ENCODE measurements at regions of chr11 and their contacts with region 1.

Region 1: GRCh38 chr11:34357701-34358257 is at the start of gene ABTB2:
- DNase-seq: peak; percentile 100
- H3K4me3 ChIP-seq: peak within 1 kb of the TSS; percentile 71
- H3K27ac ChIP-seq: peak within 1 kb of the TSS; percentile 54
- H3K4me1 ChIP-seq: peaks cover 43% of the 10 kb centered on the region
- H3K27me3 ChIP-seq: no peaks in the 10 kb centered on the region
- CTCF ChIP-seq: no peak
- total RNA-seq, gene ABTB2: 40.7 and 46.3 TPM in 2 replicates

Region 2: GRCh38 chr11:33808228-33808828 is 549.5 kb before region 1 on chr11:
- CTCF ChIA-PET with region 1: interaction called, 6 read pairs
- POLR2A ChIA-PET with region 1: no interaction called
- intact Hi-C with region 1: loop called (anchors 1 kb)
- DNase-seq: peak; percentile 98
- H3K4me3 ChIP-seq: no peak overlapping the region
- H3K27ac ChIP-seq: no peak overlapping the region
- H3K4me1 ChIP-seq: peaks cover 4% of the 10 kb centered on the region
- H3K27me3 ChIP-seq: no peaks in the 10 kb centered on the region
- CTCF ChIP-seq: peak; percentile 100

Region 3: GRCh38 chr11:33857933-33858371 is 499.8 kb before region 1 on chr11:
- CTCF ChIA-PET with region 1: no interaction called
- POLR2A ChIA-PET with region 1: no interaction called
- intact Hi-C with region 1: loop called (anchors 2 kb)
- DNase-seq: peak; percentile 97
- H3K4me3 ChIP-seq: no peak overlapping the region
- H3K27ac ChIP-seq: peak overlapping the region; percentile 24
- H3K4me1 ChIP-seq: peaks cover 65% of the 10 kb centered on the region
- H3K27me3 ChIP-seq: no peaks in the 10 kb centered on the region
- CTCF ChIP-seq: peak; percentile 100

Region 4: DNA sequence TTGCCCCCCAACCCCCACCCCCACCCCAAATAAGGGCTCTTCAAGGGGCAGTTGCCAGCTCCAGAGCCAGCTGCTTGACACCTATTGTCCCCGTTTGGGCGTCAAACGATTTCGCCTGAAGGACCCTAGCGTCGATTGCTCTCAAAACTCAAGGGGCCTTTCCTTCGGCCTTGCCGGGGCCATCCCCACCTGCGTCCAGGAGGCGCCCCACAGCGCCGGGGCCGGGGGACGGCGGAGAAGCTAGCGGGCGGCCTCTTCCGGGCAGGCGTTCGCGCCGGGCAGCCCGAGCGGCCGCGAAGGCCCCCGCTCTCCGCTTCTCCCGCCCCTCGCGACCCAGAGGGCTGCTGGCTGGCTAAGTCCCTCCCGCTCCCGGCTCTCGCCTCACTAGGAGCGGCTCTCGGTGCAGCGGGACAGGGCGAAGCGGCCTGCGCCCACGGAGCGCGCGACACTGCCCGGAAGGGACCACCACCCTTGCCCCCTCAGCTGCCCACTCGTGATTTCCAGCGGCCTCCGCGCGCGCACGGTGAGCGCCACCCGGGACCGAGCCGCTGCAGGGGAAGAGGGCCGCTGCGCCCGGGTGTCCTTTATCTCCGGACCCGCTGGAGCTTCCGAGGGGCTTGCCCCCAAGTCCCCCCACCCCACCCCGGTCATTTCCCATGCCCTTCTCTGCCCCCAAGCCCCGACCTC is 306.3 kb before region 1 on chr11 and contains the start of gene CAPRIN1:
- CTCF ChIA-PET with region 1: no interaction called
- POLR2A ChIA-PET with region 1: no interaction called
- intact Hi-C with region 1: loop called (anchors 1 kb)
- DNase-seq: peak; percentile 99
- H3K4me3 ChIP-seq: peak within 1 kb of the TSS; percentile 71
- H3K27ac ChIP-seq: peak within 1 kb of the TSS; percentile 99
- H3K4me1 ChIP-seq: peaks cover 61% of the 10 kb centered on the region
- H3K27me3 ChIP-seq: no peaks in the 10 kb centered on the region
- CTCF ChIP-seq: no peak
- total RNA-seq, gene CAPRIN1: 1,416 and 1,470 TPM in 2 replicates

Region 5: GRCh38 chr11:34149786-34150185 is 208.0 kb before region 1 on chr11:
- CTCF ChIA-PET with region 1: no interaction called
- POLR2A ChIA-PET with region 1: no interaction called
- intact Hi-C with region 1: loop called (anchors 1 kb)
- DNase-seq: peak; percentile 57
- H3K4me3 ChIP-seq: no peak overlapping the region
- H3K27ac ChIP-seq: peak overlapping the region; percentile 35
- H3K4me1 ChIP-seq: peaks cover 16% of the 10 kb centered on the region
- H3K27me3 ChIP-seq: no peaks in the 10 kb centered on the region
- CTCF ChIP-seq: peak; percentile 62

Region 6: GRCh38 chr11:34266090-34266912 is 91.5 kb before region 1 on chr11:
- CTCF ChIA-PET with region 1: interaction called, 3 read pairs
- POLR2A ChIA-PET with region 1: no interaction called
- intact Hi-C with region 1: loop called (anchors 5 kb)
- DNase-seq: peak; percentile 99
- H3K4me3 ChIP-seq: no peak overlapping the region
- H3K27ac ChIP-seq: peak overlapping the region; percentile 65
- H3K4me1 ChIP-seq: peaks cover 47% of the 10 kb centered on the region
- H3K27me3 ChIP-seq: no peaks in the 10 kb centered on the region
- CTCF ChIP-seq: no peak